ENCODE measurements at regions of chr2 and their contacts with region 1.

Region 1: GRCh38 chr2:64644177-64645004 is 9.3 kb downstream of the SERTAD2 start:
- DNase-seq: peak in 1 of 10 donors; percentile 19
- H3K4me3 ChIP-seq: peak overlapping the region; percentile 8 to 70 (median 50)
- H3K27ac ChIP-seq: peak overlapping the region in 56 of 59 donors; percentile 1 to 86 (median 76)
- H3K27me3 ChIP-seq: no peaks in the 10 kb centered on the region
- CTCF ChIP-seq: peak in 6 of 56 donors; percentile 4 to 14 (median 7)

Region 2: GRCh38 chr2:64523666-64524603 is 120.5 kb before region 1 on chr2 and contains the start of gene AFTPH:
- intact Hi-C with region 1: loop called in 1 of 2 experiments (anchors 10 kb)
- DNase-seq: peak; percentile 97 to 99 (median 98)
- H3K4me3 ChIP-seq: peak within 1 kb of the TSS; percentile 64 to 99 (median 92)
- H3K27ac ChIP-seq: peak within 1 kb of the TSS; percentile 79 to 98 (median 94)
- H3K27me3 ChIP-seq: no peaks in the 10 kb centered on the region
- CTCF ChIP-seq: peak in 42 of 56 donors; percentile 5 to 61 (median 30)
- total RNA-seq, gene AFTPH: 26.7 to 61.2 (median 44.9) TPM

Region 3: DNA sequence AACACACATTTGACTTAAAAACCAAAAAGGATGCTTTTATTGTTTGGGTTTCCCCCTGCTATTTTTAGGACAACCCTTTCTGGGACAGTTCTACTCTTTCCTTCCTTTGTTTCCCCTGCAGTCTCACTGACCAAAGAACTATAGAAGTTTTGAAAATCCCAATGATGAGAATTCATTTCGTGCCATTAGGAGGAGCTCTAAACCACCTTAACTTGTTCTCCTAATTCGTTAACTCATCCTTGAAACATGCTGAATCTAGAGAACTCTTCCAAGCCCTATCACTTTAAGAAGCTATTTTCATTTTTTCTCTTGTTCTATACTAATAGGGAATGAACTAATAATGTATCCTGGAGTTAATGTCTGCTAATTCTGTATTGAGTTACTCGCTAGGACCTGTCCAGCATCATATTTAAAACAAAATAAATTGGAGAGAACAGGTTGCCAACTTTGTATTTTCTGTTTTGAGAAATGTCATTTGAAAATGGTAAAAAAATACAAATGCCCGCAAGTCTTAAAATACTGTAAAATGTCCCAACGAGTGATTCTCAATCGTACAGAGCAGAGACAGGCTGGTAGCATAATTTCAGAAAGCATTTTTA is 57.4 kb before region 1 on chr2:
- intact Hi-C with region 1: loop called (anchors 2 to 10 kb)
- DNase-seq: no peak
- H3K4me3 ChIP-seq: no peak overlapping the region
- H3K27ac ChIP-seq: peak overlapping the region in 4 of 59 donors; percentile 2 to 40 (median 18)
- H3K27me3 ChIP-seq: no peaks in the 10 kb centered on the region
- CTCF ChIP-seq: peak; percentile 16 to 85 (median 68)

Region 4: GRCh38 chr2:64595397-64596160 is 48.8 kb before region 1 on chr2:
- intact Hi-C with region 1: loop called (anchors 5 to 10 kb)
- DNase-seq: no peak
- H3K4me3 ChIP-seq: no peak overlapping the region
- H3K27ac ChIP-seq: no peak overlapping the region
- H3K27me3 ChIP-seq: no peaks in the 10 kb centered on the region
- CTCF ChIP-seq: peak in 52 of 56 donors; percentile 18 to 74 (median 44)

Region 5: DNA sequence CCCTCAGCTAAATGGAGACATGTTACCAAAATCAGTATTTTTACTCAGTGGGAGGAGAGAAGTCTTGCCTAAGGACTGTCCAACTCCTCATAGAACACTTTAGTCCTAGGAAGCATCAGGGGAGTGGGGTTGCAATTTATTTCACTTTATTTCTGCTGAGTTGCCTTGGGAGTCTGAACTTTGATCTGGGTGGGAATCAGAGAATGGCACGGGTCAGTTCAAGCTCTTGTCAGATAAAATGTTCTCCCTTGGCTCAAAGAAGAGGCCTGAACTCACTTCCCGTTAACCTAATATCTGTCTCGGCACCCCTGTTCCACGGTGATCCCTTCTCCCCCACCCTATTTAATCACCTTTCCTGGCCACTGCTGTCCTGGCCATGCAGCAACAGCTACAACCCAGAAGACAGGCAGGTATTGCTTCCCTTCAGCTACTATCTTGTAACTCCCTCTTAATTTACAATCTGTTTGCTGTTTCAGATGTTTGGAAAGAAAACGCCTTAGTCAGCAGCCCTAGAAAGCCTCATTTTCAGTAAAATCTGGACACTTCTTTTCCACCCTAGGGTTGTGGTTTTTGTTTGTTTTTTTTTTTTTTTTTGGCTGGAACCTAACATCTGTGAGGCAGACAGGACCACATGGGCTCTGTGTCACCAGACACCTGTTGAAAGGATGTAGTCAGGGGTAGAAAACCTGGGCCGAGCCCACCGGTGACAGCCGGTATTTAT is 43.2 kb before region 1 on chr2:
- intact Hi-C with region 1: loop called (anchors 5 to 10 kb)
- DNase-seq: no peak
- H3K4me3 ChIP-seq: no peak overlapping the region
- H3K27ac ChIP-seq: no peak overlapping the region
- H3K27me3 ChIP-seq: no peaks in the 10 kb centered on the region
- CTCF ChIP-seq: no peak

Measured in dorsolateral prefrontal cortex (tissue), 120 donors.